ENCODE measurements at regions of chr1 and their contacts with region 1.

Region 1: GRCh38 chr1:109426278-109427170 is at the start of gene PSMA5:
- DNase-seq: peak; percentile 99
- ATAC-seq: peak; percentile 97
- H3K4me3 ChIP-seq: peak within 1 kb of the TSS; percentile 84 to 90 (median 84)
- H3K27ac ChIP-seq: peak within 1 kb of the TSS; percentile 93
- H3K4me1 ChIP-seq: peaks cover 45% of the 10 kb centered on the region
- H3K27me3 ChIP-seq: no peaks in the 10 kb centered on the region; a peak in 1 of 5 replicates
- CTCF ChIP-seq: 0 out of 2 replicates have a peak, but pooled peaks have one; percentile 2
- EP300 ChIP-seq: no peak; a peak in 1 of 4 replicates
- POLR2A ChIP-seq: peak; percentile 97
- RAD21 ChIP-seq: peak; percentile 60
- total RNA-seq, gene PSMA5: 169 and 261 TPM in 2 replicates

Region 2: GRCh38 chr1:109201123-109201703 is 225.3 kb before region 1 on chr1:
- CTCF ChIA-PET with region 1: no interaction called
- POLR2A ChIA-PET with region 1: no interaction called
- in situ Hi-C with region 1: no loop called
- intact Hi-C with region 1: no loop called
- DNase-seq: peak; percentile 49
- ATAC-seq: peak; percentile 65
- H3K4me3 ChIP-seq: no peak overlapping the region
- H3K27ac ChIP-seq: no peak overlapping the region
- H3K4me1 ChIP-seq: peaks cover 28% of the 10 kb centered on the region
- H3K27me3 ChIP-seq: no peaks in the 10 kb centered on the region
- CTCF ChIP-seq: peak; percentile 79
- EP300 ChIP-seq: no peak
- POLR2A ChIP-seq: no peak
- RAD21 ChIP-seq: 0 out of 2 replicates have a peak, but pooled peaks have one; percentile 23

Region 3: DNA sequence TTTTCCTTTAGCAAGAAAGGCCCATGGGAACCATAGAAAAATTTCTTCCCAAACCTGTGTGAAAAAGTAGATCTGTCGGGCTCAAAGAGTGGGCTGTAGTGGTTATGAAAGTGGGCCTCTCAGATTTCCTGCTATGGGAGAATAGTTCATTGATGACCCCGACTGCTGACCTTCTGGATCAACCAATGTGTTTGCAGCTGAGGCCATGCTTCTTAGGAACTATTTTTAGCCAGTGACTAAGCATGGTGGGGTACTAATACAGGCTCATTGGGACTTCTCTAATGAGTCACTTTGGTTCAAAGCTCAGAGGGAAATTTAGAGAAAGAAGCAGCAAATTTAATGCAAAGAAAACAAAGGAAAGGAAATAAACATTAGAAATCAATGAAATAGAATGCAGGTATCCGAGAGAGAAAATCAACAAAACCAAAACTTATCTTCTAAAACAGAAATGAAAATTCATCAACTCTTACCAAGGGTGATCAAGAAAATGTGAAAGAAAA is 12.3 kb after region 1 on chr1:
- CTCF ChIA-PET with region 1: no interaction called
- POLR2A ChIA-PET with region 1: interaction called, 12 read pairs
- in situ Hi-C with region 1: no loop called
- intact Hi-C with region 1: loop called (anchors 2 kb)
- DNase-seq: peak; percentile 72
- ATAC-seq: peak; percentile 78
- H3K4me3 ChIP-seq: no peak overlapping the region
- H3K27ac ChIP-seq: no peak overlapping the region
- H3K4me1 ChIP-seq: peaks cover 38% of the 10 kb centered on the region
- H3K27me3 ChIP-seq: peaks cover 0 to 20% of the 10 kb centered on the region in 2 experiments; a peak in 3 of 5 replicates
- CTCF ChIP-seq: no peak
- EP300 ChIP-seq: peak in 1 of 2 experiments; percentile 41; a peak in 1 of 4 replicates
- POLR2A ChIP-seq: no peak
- RAD21 ChIP-seq: no peak

Region 4: DNA sequence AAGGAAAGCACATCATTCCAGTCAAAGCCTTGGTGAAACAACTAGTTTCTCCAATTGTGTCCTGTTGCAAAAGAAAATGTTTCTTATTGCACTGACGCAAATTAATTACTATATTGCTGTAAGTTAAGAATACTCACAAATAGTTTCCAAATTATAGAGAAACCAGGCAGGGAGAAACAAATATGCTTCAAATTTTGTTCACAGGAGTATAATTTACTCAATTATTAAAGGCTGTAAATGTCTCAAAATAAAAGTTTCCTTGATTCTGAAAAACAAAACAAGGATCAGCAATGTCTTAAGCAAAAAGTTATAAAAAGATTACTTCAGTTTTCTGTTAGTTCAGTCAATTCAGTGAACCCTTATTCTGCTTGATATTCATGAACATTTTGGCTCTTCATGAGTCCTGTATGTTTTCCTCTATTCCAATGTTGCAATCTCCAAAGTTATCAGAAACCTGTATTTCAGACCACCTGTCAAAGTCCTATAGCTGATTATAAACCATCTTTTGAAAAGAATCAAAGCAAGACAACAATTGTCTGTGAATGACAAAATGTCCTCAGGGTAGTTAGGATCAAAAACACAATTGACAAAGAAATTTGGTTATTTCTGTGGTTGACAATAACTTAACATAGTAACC is 28.1 kb after region 1 on chr1:
- CTCF ChIA-PET with region 1: no interaction called
- POLR2A ChIA-PET with region 1: interaction called, 8 read pairs
- in situ Hi-C with region 1: no loop called
- intact Hi-C with region 1: loop called (anchors 2 kb)
- DNase-seq: no peak
- ATAC-seq: no peak
- H3K4me3 ChIP-seq: no peak overlapping the region
- H3K27ac ChIP-seq: no peak overlapping the region
- H3K4me1 ChIP-seq: peaks cover 22% of the 10 kb centered on the region
- H3K27me3 ChIP-seq: no peaks in the 10 kb centered on the region; a peak in 1 of 5 replicates
- CTCF ChIP-seq: no peak
- EP300 ChIP-seq: no peak
- POLR2A ChIP-seq: no peak
- RAD21 ChIP-seq: no peak

Region 5: GRCh38 chr1:109483672-109484518 is 57.4 kb after region 1 on chr1 and contains the start of gene ATXN7L2:
- CTCF ChIA-PET with region 1: no interaction called
- POLR2A ChIA-PET with region 1: interaction called, 7 read pairs
- in situ Hi-C with region 1: loop called (anchors 5 kb)
- intact Hi-C with region 1: no loop called
- DNase-seq: peak; percentile 84
- ATAC-seq: peak; percentile 84
- H3K4me3 ChIP-seq: peak within 1 kb of the TSS; percentile 75 to 92 (median 78)
- H3K27ac ChIP-seq: peak within 1 kb of the TSS; percentile 83
- H3K4me1 ChIP-seq: peaks cover 19% of the 10 kb centered on the region
- H3K27me3 ChIP-seq: peaks cover 1 to 17% of the 10 kb centered on the region in 2 experiments; a peak in 4 of 5 replicates
- CTCF ChIP-seq: no peak
- EP300 ChIP-seq: 0 out of 4 replicates have a peak, but pooled peaks of 1 of the 2 experiments have one; percentile 18
- POLR2A ChIP-seq: peak; percentile 79 to 92
- RAD21 ChIP-seq: peak; percentile 47; the same call in 1 of the 2 replicates
- total RNA-seq, gene ATXN7L2: 1.3 and 2.7 TPM in 2 replicates

Region 6: GRCh38 chr1:109493805-109494539 is 67.4 kb after region 1 on chr1 and contains the start of gene CYB561D1:
- CTCF ChIA-PET with region 1: no interaction called
- POLR2A ChIA-PET with region 1: interaction called, 7 read pairs
- in situ Hi-C with region 1: no loop called
- intact Hi-C with region 1: loop called (anchors 5 kb)
- DNase-seq: peak; percentile 74
- ATAC-seq: peak; percentile 91
- H3K4me3 ChIP-seq: peak within 1 kb of the TSS; percentile 91 to 98 (median 95)
- H3K27ac ChIP-seq: peak within 1 kb of the TSS; percentile 40
- H3K4me1 ChIP-seq: peaks cover 18% of the 10 kb centered on the region
- H3K27me3 ChIP-seq: no peaks in the 10 kb centered on the region
- CTCF ChIP-seq: peak; percentile 95
- EP300 ChIP-seq: no peak
- POLR2A ChIP-seq: peak; percentile 61 to 87; a peak in 3 of 4 replicates
- RAD21 ChIP-seq: peak; percentile 86
- total RNA-seq, gene CYB561D1: 3.9 and 4.1 TPM in 2 replicates

Measured in HepG2 (cell line).